AG04449 (cell line): ENCODE measurements at regions of chr9 and their contacts with region 1.

Region 1: GRCh38 chr9:128296337-128297220 is 20.5 kb downstream of the SWI5 start:
- DNase-seq: no peak
- H3K4me3 ChIP-seq: no peak overlapping the region
- CTCF ChIP-seq: no peak

Region 2: DNA sequence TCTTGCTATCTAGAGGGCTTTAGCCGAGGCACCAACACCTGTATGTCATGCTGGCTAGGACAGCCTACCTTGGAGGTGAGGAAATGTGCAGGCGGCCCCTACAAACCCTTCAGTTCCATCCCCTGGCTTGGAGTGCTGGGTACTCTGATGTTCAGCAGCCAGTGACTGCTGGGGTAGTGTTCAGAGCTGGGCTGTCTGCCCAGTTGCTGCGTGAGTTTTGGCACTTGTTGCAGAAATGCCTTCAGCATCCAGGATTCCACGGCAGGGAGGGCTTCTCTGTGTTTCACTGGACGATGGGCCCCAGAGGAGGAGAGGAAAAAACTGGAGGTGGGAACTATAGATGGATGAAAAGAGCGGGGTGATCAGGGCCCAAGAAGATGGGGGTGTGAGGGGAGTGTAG is 10.1 kb before region 1 on chr9:
- CTCF ChIA-PET with region 1: interaction called, 56 read pairs
- POLR2A ChIA-PET with region 1: interaction called, 4 read pairs
- DNase-seq: no peak
- H3K4me3 ChIP-seq: no peak overlapping the region
- CTCF ChIP-seq: no peak

Region 3: DNA sequence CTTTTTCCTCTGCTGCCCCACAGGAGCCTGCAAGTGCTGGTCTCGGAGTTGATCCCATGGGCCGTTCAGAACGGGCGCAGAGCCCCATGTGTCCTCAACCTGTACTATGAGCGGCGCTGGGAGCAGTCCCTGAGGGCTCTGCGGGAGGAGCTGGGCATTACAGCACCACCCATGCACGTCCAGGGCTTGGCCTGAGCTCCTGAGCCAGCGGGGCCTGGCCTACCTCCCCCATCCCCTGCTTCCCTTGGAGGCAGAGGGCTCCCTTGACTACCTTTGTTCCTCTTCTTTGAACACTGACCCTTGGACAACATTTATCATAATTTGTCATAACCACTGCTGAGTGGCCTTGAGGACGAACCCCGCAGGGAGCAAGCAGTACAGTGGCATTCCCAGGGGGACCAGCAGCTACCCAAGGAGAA is 36.9 kb after region 1 on chr9:
- CTCF ChIA-PET with region 1: interaction called, 10 read pairs
- POLR2A ChIA-PET with region 1: no interaction called
- DNase-seq: no peak
- H3K4me3 ChIP-seq: no peak overlapping the region
- CTCF ChIP-seq: no peak

Region 4: DNA sequence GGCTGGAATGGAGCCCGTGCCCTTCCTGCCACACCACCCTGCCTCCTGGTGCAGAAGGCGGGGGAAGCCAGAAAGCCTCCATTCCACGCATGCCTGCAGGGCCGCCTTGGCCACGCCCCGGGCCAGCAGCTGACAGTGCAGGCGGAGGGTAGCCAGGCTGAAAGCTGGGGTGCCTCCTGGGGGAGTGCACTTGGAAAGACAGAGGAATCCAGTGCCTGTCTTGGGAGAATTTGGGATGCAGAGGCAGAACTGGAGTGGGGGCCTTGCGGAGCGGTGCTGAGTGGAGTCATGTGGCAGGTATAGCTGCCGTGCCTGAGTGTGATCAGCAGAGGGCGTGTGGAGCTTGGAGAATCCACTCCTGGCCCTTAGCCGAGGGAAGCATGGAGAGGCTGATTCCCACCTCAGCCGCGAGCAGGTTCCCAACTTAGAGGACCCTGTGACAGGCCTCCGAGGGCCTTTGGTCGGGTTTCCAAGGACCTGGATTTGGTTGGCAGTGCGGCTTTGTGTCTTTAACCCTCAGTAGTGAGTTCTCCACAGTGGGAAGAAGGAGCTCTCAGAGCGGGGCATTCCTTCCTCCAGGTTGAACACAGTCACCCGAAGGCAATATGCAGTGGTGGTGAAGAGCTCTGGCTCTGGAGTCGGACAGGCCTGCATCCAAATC is 65.5 kb after region 1 on chr9:
- CTCF ChIA-PET with region 1: interaction called, 51 read pairs
- POLR2A ChIA-PET with region 1: interaction called, 5 read pairs
- DNase-seq: peak; percentile 36
- H3K4me3 ChIP-seq: peak overlapping the region; percentile 58
- CTCF ChIP-seq: peak; percentile 90

Region 5: DNA sequence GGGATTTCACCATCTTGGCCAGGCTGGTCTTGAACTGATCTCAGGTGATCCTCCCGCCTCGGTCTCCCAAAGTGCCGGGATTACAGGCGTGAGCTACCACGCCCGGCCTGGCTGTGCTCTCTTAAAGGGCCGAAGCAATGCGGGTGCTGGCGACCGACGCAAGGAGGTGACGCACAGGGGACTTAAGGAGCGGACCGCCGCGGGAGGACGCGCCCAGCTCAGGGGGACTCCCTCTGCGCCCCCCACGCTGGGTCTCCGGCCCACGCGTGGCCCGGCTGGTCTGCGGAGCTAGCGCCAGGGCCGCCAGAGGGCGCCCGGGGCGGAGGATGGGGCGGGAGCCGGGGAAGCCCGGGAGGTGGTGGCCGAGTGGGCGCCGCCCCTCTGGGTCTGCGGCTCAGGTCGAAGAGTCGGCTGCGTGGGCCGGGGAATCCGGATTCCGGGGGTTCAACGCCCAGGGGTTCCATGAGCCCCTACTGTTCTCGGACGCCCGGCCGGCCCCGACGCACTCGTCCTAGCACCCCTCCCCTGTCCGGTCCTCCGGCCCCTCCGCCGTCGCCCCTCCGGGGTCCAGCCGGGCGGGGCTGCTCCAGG is 123.6 kb after region 1 on chr9:
- CTCF ChIA-PET with region 1: interaction called, 23 read pairs
- POLR2A ChIA-PET with region 1: no interaction called
- DNase-seq: no peak
- H3K4me3 ChIP-seq: peak overlapping the region; percentile 82
- CTCF ChIP-seq: peak; percentile 85

Region 6: DNA sequence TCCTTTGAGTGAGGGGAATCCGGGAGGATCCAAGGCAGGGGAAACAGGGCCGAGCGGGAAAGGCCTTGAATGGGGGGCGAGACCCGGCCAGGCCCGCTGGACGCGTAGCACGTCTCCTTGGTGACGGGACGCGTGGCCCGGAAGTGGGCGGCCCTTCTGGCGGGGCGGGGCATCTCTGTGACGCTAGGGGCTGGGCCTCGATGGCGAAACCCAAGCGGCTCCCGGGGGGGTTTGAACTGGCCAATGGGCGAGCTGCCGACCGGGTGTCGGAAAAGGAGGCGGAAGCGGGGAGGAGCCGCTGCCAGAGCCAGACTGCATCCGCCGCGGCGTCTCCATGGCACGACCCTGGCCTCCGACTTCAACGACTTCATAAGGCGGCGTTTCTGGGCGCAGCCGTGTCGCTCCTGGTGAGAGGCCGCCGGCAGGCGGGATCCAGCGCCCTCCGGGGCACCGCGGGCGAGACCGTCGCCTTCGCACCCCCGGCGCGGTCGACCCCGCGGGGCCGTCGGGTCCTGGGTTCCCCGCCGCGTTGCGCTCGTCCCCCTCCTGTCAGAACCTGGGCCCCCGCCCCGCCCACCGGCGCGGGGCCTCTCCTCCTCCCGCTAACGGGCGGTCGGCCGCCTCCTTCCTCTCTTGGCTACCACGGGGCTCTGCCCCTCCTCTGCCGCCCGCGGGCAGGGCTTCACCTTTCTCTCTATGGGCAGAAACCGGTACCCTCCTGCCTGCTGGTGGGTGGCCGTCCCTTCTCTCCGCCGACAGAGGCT is 159.5 kb after region 1 on chr9 and contains the start of gene ODF2:
- CTCF ChIA-PET with region 1: no interaction called
- POLR2A ChIA-PET with region 1: no interaction called
- DNase-seq: peak; percentile 49
- H3K4me3 ChIP-seq: peak within 1 kb of the TSS; percentile 80
- CTCF ChIP-seq: no peak